ENCODE measurements at regions of chr2 and their contacts with region 1.

Region 1: DNA sequence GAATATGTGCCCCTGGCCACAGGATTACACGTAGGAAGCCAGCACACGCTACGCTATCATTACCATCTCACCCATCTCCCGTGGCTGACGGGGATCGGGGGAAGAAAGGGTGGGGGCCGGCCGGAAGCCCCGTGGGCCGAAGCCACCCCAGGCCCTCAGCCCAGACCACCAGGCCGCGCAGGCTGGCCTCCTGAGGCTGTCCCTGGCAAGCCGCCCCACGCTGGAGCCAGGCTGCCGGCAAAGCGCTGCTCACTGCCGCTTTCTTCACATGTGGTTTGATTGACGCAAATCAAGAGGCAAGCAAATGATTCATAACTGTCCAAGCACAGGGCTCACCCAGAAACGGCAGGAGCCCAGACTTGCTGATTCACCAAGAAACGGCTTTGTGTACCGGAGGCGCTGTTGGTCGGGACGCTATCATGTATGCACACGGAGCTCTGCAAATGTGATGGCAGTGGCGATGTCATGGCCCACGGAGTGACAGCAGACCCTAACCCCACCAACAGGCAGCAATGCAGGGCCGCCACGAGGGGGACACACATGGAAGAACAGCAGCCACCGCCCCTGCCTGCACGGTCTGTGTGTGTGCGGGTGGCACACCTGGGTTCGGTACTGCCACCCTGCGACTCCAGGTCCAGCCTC is 125.7 kb downstream of the HDAC4 start:
- DNase-seq: peak; percentile 91
- ATAC-seq: peak; percentile 89
- H3K4me3 Mint-ChIP-seq: peak overlapping the region; percentile 53
- H3K27ac Mint-ChIP-seq: peak overlapping the region; percentile 83
- H3K4me1 Mint-ChIP-seq: peaks cover 46% of the 10 kb centered on the region
- H3K27me3 Mint-ChIP-seq: peaks cover 31% of the 10 kb centered on the region

Region 2: GRCh38 chr2:239106314-239106908 is 168.8 kb before region 1 on chr2:
- CTCF ChIA-PET with region 1: no interaction called
- POLR2A ChIA-PET with region 1: no interaction called
- intact Hi-C with region 1: no loop called
- DNase-seq: peak; percentile 48
- ATAC-seq: peak; percentile 39
- H3K4me3 Mint-ChIP-seq: no peak overlapping the region
- H3K27ac Mint-ChIP-seq: no peak overlapping the region
- H3K4me1 Mint-ChIP-seq: no peaks in the 10 kb centered on the region
- H3K27me3 Mint-ChIP-seq: no peaks in the 10 kb centered on the region

Region 3: GRCh38 chr2:239288951-239289511 is 13.9 kb after region 1 on chr2:
- CTCF ChIA-PET with region 1: interaction called, 5 read pairs
- POLR2A ChIA-PET with region 1: interaction called, 4 read pairs
- intact Hi-C with region 1: loop called (anchors 1 kb)
- DNase-seq: peak; percentile 69
- ATAC-seq: peak; percentile 65
- H3K4me3 Mint-ChIP-seq: peak overlapping the region; percentile 36
- H3K27ac Mint-ChIP-seq: peak overlapping the region; percentile 89
- H3K4me1 Mint-ChIP-seq: peaks cover 80% of the 10 kb centered on the region
- H3K27me3 Mint-ChIP-seq: peaks cover 21% of the 10 kb centered on the region

Region 4: GRCh38 chr2:239298116-239298804 is 23.1 kb after region 1 on chr2:
- CTCF ChIA-PET with region 1: interaction called, 5 read pairs
- POLR2A ChIA-PET with region 1: interaction called, 4 read pairs
- intact Hi-C with region 1: loop called (anchors 1 kb)
- DNase-seq: peak; percentile 86
- ATAC-seq: peak; percentile 91
- H3K4me3 Mint-ChIP-seq: peak overlapping the region; percentile 63
- H3K27ac Mint-ChIP-seq: peak overlapping the region; percentile 75
- H3K4me1 Mint-ChIP-seq: peaks cover 71% of the 10 kb centered on the region
- H3K27me3 Mint-ChIP-seq: peaks cover 8% of the 10 kb centered on the region

Region 5: DNA sequence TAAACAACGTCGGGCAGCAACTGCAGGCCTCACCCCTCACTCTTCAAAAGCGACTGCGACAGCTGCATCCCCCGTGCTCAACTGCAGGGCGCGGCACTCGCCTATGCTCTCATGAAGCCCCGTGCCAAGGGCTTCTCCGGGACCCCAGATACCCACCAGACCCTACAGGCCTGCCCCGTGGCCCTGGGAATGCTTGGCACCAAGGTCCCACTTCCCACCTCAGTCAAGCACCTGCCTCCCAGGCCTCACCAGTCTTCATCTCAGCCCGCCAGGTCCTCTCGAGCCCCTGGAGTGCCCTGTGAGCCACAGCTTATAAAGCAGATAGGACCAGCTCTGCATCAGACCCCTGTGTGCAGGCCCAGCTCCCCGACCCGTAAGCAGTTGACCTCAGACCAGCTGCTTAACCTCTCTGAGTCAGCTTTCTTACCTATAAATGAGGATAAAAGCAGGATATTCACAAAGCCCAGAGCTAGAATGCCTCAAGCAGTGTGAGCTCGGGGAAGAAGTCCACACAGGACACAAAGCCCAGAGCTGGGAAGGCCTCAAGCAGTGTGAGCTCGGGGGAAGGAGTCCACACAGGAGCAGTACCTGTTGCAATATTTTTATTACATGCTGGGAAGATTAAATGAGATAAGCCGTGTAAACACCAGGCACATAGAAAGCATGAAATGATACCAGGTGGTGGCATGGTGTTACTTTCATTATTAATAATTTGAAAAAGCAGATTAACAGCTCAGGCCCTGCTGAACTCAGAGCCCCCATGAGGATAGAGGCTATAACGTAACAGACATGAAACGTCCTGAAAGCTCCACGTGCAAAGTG is 28.8 kb after region 1 on chr2:
- CTCF ChIA-PET with region 1: interaction called, 4 read pairs
- POLR2A ChIA-PET with region 1: interaction called, 3 read pairs
- intact Hi-C with region 1: loop called in 1 of 2 experiments (anchors 1 kb)
- DNase-seq: peak; percentile 46
- ATAC-seq: peak; percentile 89
- H3K4me3 Mint-ChIP-seq: no peak overlapping the region
- H3K27ac Mint-ChIP-seq: no peak overlapping the region
- H3K4me1 Mint-ChIP-seq: peaks cover 38% of the 10 kb centered on the region
- H3K27me3 Mint-ChIP-seq: peaks cover 4% of the 10 kb centered on the region

Region 6: GRCh38 chr2:239326831-239327535 is 51.8 kb after region 1 on chr2:
- CTCF ChIA-PET with region 1: no interaction called
- POLR2A ChIA-PET with region 1: no interaction called
- intact Hi-C with region 1: loop called in 1 of 2 experiments (anchors 2 kb)
- DNase-seq: peak; percentile 89
- ATAC-seq: peak; percentile 85
- H3K4me3 Mint-ChIP-seq: peak overlapping the region; percentile 17
- H3K27ac Mint-ChIP-seq: peak overlapping the region; percentile 74
- H3K4me1 Mint-ChIP-seq: peaks cover 75% of the 10 kb centered on the region
- H3K27me3 Mint-ChIP-seq: peaks cover 5% of the 10 kb centered on the region

Region 7: DNA sequence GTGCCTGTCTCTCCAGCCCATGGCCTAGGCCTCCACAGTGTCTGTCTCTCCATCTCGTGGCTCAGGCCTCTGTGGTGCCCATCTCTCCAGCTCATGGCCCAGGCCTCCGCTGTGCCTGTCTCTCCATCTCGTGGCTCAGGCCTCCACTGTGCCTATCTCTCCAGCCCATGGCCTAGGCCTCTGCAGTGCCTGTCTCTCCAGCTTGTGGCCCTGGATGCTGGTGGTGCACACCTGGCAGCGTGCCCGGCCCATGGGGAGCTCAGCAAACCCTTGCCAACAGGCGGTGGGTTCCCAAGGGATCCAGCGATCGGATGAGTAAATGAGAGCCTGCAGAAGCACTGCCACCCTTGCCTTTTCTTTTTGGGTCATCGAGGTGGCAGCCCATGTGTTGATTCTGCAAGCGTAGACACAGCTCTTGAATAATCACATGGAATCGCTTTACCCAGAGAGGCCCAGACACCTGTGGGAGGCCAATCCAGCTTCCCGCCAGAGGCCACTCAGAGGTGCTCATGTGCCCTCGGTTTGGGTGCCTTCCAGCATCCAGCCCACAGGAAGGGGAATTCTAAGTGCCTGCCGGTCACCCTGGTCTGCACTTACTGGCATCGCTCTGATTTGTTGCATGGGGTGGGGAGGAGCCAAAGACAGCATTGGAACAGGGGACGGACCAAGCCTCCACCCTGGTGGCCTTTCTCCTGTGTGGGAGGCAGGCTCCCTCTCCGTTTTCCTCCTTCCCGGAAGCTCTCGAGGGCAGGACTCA is 227.4 kb after region 1 on chr2:
- CTCF ChIA-PET with region 1: no interaction called
- POLR2A ChIA-PET with region 1: no interaction called
- intact Hi-C with region 1: no loop called
- DNase-seq: no peak
- ATAC-seq: no peak
- H3K4me3 Mint-ChIP-seq: no peak overlapping the region
- H3K27ac Mint-ChIP-seq: no peak overlapping the region
- H3K4me1 Mint-ChIP-seq: no peaks in the 10 kb centered on the region
- H3K27me3 Mint-ChIP-seq: no peaks in the 10 kb centered on the region

Region 8: DNA sequence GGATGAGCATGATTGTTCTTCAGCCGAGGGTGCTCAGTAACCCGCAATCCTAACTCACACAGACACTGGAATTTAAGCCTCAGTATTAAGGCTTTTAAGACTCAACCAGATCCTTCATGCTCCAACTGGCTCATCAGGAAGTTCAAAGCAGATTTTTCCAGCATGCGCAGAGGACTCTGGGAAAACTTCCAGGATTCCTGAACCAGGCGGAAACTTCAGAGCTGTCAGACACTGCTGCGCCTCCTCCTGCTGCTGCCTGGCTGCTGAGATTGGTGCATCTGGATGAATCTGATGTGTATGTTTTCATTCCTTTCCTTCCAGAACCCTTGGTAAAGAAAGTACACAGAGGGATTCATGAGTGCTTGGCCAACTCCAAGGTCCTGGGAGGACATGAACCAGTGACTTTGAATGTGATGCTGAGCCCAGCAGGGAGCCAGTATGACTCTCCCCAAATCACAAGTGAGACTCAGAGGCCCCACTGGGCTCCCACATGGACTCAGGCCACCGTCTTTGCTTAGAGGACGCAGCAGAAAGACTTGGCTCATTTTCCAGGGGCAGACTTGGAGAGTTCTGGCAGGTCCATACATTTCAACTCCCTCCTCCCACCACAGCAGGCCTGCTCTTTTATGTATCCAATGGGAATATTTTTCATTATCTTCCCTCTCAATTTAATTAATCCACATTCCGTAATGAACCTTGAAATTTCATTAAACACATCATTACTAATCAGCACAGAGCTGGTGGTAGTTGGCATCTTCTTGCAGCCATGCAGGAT is 269.2 kb after region 1 on chr2:
- CTCF ChIA-PET with region 1: no interaction called
- POLR2A ChIA-PET with region 1: no interaction called
- intact Hi-C with region 1: loop called in 1 of 2 experiments (anchors 1 kb)
- DNase-seq: peak; percentile 4
- ATAC-seq: no peak
- H3K4me3 Mint-ChIP-seq: no peak overlapping the region
- H3K27ac Mint-ChIP-seq: peak overlapping the region; percentile 83
- H3K4me1 Mint-ChIP-seq: peaks cover 50% of the 10 kb centered on the region
- H3K27me3 Mint-ChIP-seq: peaks cover 7% of the 10 kb centered on the region

Region 9: DNA sequence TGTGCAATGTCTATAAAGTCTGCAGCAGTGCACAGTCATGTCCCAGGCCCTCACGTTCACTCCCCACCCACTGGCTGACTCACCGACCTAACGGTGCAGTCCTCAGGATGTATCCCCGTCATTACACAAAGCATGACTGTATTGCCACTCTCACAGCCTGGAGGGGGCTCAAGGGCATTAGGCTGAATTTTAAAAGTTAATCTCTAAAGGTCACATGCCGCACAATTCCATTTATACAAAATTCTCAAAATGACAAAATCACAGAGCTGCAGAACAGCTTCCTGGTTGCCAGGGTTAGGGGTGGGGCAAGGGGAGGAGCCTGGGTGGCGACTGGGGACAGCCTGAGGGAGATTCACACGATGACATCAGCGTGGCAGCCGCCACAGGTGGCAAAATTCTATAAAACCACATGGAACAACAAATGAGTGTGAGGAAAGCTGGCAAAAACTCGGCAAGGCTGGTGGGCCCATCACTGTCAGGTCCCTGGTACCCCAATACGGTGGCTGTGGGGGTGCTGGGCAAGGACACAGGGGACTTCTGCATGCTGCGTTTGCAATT is 652.3 kb after region 1 on chr2:
- CTCF ChIA-PET with region 1: no interaction called
- POLR2A ChIA-PET with region 1: no interaction called
- intact Hi-C with region 1: loop called in 1 of 2 experiments (anchors 10 kb)
- DNase-seq: peak; percentile 89
- ATAC-seq: peak; percentile 100
- H3K4me3 Mint-ChIP-seq: peak overlapping the region; percentile 26
- H3K27ac Mint-ChIP-seq: peak overlapping the region; percentile 67
- H3K4me1 Mint-ChIP-seq: peaks cover 24% of the 10 kb centered on the region
- H3K27me3 Mint-ChIP-seq: peaks cover 3% of the 10 kb centered on the region

Region 10: GRCh38 chr2:239953418-239954061 is 678.4 kb after region 1 on chr2:
- CTCF ChIA-PET with region 1: no interaction called
- POLR2A ChIA-PET with region 1: no interaction called
- intact Hi-C with region 1: no loop called
- DNase-seq: no peak
- ATAC-seq: no peak
- H3K4me3 Mint-ChIP-seq: no peak overlapping the region
- H3K27ac Mint-ChIP-seq: no peak overlapping the region
- H3K4me1 Mint-ChIP-seq: no peaks in the 10 kb centered on the region
- H3K27me3 Mint-ChIP-seq: no peaks in the 10 kb centered on the region

Measured in activated CD4-positive, alpha-beta T cell treated with anti-CD3 and anti-CD28 coated beads for 36 hours (primary cell).